ENCODE measurements at regions of chr15 and their contacts with region 1.

Region 1: DNA sequence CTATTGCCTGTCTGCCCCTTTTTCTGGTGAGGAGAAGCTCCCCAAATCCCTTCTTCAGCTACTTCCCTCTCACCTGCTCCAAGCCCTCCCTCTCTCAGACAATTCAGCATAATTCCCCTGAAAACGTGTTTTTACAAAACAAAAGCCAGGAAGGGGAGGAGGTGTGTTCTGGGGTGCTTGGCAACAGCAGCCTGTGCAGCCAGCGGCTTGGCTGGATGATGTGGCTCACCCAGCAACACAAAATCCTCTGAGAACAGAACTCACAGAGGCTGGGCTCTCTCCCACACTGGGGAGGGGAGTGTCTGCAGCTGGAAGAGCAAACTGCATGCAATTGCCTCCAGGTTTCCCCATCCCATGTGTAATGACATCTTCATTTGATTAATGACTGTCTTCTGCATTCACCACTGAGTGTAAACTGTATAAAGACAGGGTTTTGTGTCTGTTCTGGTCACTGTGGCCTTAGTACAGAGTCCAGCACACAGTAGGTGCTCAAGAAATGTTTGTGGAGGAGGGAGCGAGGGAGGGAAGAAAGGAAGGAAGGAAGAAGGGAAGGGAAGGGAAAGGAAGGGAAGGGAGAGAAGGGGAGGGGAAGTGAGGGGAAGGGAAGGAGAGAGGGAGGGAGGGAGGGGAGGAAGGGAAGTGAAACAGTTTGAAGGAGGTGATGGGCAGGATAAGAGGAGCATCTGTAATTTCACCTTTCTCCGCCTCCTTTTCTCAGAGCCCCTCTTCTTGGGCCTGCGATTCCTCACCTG is 70.1 kb upstream of the GLCE start:
- DNase-seq: peak in 2 of 7 donors; percentile 4 to 62
- H3K4me3 ChIP-seq: no peak overlapping the region
- H3K27ac ChIP-seq: no peak overlapping the region
- H3K4me1 ChIP-seq: no peaks in the 10 kb centered on the region
- H3K27me3 ChIP-seq: no peaks in the 10 kb centered on the region
- CTCF ChIP-seq: no peak
- POLR2A ChIP-seq: no peak

Region 2: DNA sequence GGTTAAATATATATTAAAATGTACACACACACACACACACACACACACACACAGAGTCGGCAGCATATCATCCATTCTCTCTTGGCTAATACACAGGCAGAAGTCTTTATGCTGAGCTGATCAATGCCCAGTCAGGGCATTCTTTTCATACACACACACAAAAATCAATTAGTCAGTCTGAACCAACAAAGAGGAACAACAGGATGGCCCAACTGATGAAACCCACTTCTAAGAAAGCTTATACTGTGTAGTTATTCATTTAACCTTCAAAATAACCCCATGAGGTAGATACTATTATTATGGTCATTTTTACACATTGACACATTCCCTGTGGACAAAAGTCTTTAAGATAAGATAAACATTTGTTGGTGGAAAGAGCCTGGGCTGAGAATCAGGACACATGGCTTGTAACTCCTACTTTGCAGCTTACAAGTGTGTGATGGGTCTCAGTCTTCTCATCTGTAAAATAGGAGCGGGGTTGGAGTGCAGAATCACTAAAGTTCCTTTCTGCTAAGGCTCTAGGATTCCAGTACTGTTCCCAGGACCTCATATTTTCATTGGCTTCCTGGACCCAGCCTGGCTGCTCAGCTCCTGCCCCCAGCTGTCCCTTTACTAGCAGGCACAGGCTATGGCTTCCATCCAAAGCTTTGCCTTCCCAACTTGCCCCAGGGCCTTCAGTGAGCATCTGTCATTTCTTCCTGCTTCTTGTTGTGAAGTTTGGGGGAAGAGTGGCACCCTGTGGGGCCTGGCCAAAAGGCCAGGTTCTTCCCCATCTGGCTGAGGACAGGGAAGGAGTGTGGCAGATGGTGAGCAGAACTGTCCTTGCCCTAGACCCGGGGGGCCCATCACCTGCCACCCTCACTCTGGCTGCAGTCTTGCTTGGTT is 42.8 kb after region 1 on chr15:
- intact Hi-C with region 1: loop called in 1 of 2 experiments (anchors 5 kb)
- DNase-seq: peak in 4 of 7 donors; percentile 17 to 66 (median 26)
- H3K4me3 ChIP-seq: no peak overlapping the region
- H3K27ac ChIP-seq: no peak overlapping the region
- H3K4me1 ChIP-seq: peaks cover 14 to 16% of the 10 kb centered on the region in 2 donors
- H3K27me3 ChIP-seq: no peaks in the 10 kb centered on the region
- CTCF ChIP-seq: no peak
- POLR2A ChIP-seq: no peak

Region 3: GRCh38 chr15:69141286-69141701 is 50.9 kb after region 1 on chr15:
- intact Hi-C with region 1: loop called in 1 of 2 experiments (anchors 10 kb)
- DNase-seq: no peak
- H3K4me3 ChIP-seq: no peak overlapping the region
- H3K27ac ChIP-seq: no peak overlapping the region
- H3K4me1 ChIP-seq: no peaks in the 10 kb centered on the region
- H3K27me3 ChIP-seq: no peaks in the 10 kb centered on the region
- CTCF ChIP-seq: no peak
- POLR2A ChIP-seq: no peak

Region 4: DNA sequence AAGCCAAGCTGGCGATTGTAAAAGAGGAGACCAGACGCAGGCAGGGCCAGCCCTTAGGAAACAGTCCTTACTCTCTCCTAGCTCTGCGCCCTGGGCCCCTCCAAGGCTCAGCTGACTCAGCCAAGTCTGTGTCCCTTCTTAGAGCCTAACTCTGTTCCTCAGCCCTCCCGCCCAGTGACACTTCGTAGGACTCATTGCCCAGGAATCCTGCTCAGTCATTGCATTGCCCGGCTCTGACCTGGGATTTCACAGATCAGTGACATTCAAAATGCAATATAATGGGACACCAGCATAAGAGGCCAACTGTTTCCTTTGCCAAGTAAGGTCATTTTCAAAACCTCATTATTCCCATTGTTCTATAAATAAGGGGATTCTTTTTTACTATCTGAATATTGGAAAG is 763.2 kb after region 1 on chr15:
- intact Hi-C with region 1: no loop called
- DNase-seq: peak in 2 of 7 donors; percentile 9 to 22
- H3K4me3 ChIP-seq: no peak overlapping the region
- H3K27ac ChIP-seq: no peak overlapping the region
- H3K4me1 ChIP-seq: no peaks in the 10 kb centered on the region
- H3K27me3 ChIP-seq: no peaks in the 10 kb centered on the region
- CTCF ChIP-seq: no peak
- POLR2A ChIP-seq: no peak